ENCODE measurements at regions of chr18 and their contacts with region 1.

Region 1: DNA sequence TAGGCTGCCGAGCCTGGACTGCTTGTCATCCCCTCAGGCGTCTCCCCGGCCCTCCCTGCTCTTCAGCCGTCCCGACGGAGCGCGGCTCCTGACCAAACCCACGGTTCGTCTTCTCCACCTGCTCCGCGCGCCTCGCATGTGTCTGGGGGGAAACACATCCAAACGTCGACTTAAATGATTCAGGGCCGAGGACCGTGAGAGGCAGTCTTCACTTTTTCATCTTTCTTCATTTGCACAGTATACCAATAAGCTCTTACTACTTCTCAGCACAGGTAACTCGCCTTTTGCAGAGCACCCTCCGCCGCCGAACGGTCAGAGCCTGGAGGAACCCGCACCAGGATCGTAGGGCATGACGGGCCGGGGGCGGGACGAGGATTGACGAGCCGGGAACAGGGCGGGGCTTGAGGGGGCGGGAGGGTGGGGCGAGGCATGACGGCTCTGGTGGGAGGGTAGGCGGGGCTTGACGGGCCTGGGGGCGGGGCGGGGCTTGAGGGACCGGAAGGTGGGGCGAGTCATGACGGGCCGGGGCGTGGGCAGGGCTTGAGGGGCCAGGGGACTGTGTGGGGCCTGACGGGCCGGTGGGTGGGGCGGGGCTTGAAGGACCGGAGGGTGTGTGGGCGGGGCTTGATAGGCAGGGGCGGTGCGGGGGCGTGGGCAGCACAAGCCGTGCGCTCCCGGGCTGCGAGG is at the start of gene SEH1L:
- DNase-seq: peak; percentile 96
- H3K4me3 Mint-ChIP-seq: peak within 1 kb of the TSS; percentile 96
- H3K27ac Mint-ChIP-seq: peak within 1 kb of the TSS; percentile 98
- H3K4me1 Mint-ChIP-seq: peaks cover 14% of the 10 kb centered on the region
- H3K27me3 Mint-ChIP-seq: no peaks in the 10 kb centered on the region
- CTCF ChIP-seq: no peak
- total RNA-seq, gene SEH1L: 108 and 139 TPM in 2 replicates

Region 2: GRCh38 chr18:12702221-12703095 is 245.0 kb before region 1 on chr18 and contains the starts of genes CEP76 and PSMG2:
- CTCF ChIA-PET with region 1: no interaction called
- POLR2A ChIA-PET with region 1: interaction called, 15 read pairs
- intact Hi-C with region 1: no loop called
- DNase-seq: peak; percentile 90
- H3K4me3 Mint-ChIP-seq: peak within 1 kb of the TSS; percentile 100
- H3K27ac Mint-ChIP-seq: peak within 1 kb of the TSS; percentile 100
- H3K4me1 Mint-ChIP-seq: peaks cover 45% of the 10 kb centered on the region
- H3K27me3 Mint-ChIP-seq: no peaks in the 10 kb centered on the region
- CTCF ChIP-seq: no peak
- total RNA-seq, gene CEP76: 4.9 and 6.4 TPM in 2 replicates
- total RNA-seq, gene PSMG2: 88.6 and 100 TPM in 2 replicates

Region 3: GRCh38 chr18:12883684-12884405 is 63.7 kb before region 1 on chr18 and contains the start of gene PTPN2:
- CTCF ChIA-PET with region 1: interaction called, 3 read pairs
- POLR2A ChIA-PET with region 1: interaction called, 17 read pairs
- intact Hi-C with region 1: no loop called
- DNase-seq: peak; percentile 89
- H3K4me3 Mint-ChIP-seq: peak within 1 kb of the TSS; percentile 73
- H3K27ac Mint-ChIP-seq: peak within 1 kb of the TSS; percentile 96
- H3K4me1 Mint-ChIP-seq: peaks cover 29% of the 10 kb centered on the region
- H3K27me3 Mint-ChIP-seq: no peaks in the 10 kb centered on the region
- CTCF ChIP-seq: no peak
- total RNA-seq, gene PTPN2: 60.0 and 75.2 TPM in 2 replicates

Region 4: GRCh38 chr18:12990967-12991838 is 43.7 kb after region 1 on chr18 and contains the start of gene CEP192:
- CTCF ChIA-PET with region 1: no interaction called
- POLR2A ChIA-PET with region 1: interaction called, 33 read pairs
- intact Hi-C with region 1: no loop called
- DNase-seq: peak; percentile 98
- H3K4me3 Mint-ChIP-seq: peak within 1 kb of the TSS; percentile 99
- H3K27ac Mint-ChIP-seq: peak within 1 kb of the TSS; percentile 83
- H3K4me1 Mint-ChIP-seq: peaks cover 21% of the 10 kb centered on the region
- H3K27me3 Mint-ChIP-seq: no peaks in the 10 kb centered on the region
- CTCF ChIP-seq: no peak
- total RNA-seq, gene CEP192: 14.3 and 15.2 TPM in 2 replicates

Measured in MCF 10A (cell line).